Activated CD4-positive, alpha-beta memory T cell treated with anti-CD3 and anti-CD28 coated beads, Interleukin-2, amount 10 ng/mL, durations not matched to agents 7 days and 5 days (primary cell): ENCODE measurements at regions of chr1 and their contacts with region 1.

Region 1: GRCh38 chr1:159009704-159010361 is at the start of gene IFI16:
- DNase-seq: peak; percentile 72
- H3K4me3 Mint-ChIP-seq: peak within 1 kb of the TSS; percentile 99
- H3K27ac Mint-ChIP-seq: peak within 1 kb of the TSS; percentile 100
- H3K4me1 Mint-ChIP-seq: peaks cover 43% of the 10 kb centered on the region
- H3K27me3 Mint-ChIP-seq: no peaks in the 10 kb centered on the region
- total RNA-seq, gene IFI16: 394 to 395 TPM

Region 2: DNA sequence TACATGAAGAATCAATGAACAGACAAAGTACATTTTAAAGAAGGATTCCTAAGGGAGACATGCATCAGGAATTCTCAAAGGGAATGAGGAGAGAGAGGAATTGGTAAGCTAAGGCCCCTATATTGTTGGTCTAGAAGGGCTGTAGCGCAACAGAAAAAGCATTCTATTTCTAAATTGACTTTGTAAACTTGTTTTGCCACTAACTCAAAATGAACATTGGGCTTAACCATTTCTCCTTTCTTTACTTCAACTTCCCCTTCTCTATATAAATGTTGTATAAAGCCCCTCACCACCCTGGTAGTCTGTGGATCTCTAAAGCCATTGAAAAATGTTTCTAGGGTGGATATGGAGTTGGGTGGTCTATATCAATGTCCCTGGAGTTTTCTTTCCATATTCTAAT is 208.4 kb before region 1 on chr1:
- CTCF ChIA-PET with region 1: no interaction called
- POLR2A ChIA-PET with region 1: no interaction called
- DNase-seq: no peak
- H3K4me3 Mint-ChIP-seq: no peak overlapping the region
- H3K27ac Mint-ChIP-seq: no peak overlapping the region
- H3K4me1 Mint-ChIP-seq: peaks cover 2% of the 10 kb centered on the region
- H3K27me3 Mint-ChIP-seq: peaks cover 10% of the 10 kb centered on the region

Region 3: GRCh38 chr1:158830904-158831507 is 178.8 kb before region 1 on chr1 and contains the start of gene MNDA:
- CTCF ChIA-PET with region 1: no interaction called
- POLR2A ChIA-PET with region 1: no interaction called
- DNase-seq: no peak
- H3K4me3 Mint-ChIP-seq: no peak within 1 kb of the TSS
- H3K27ac Mint-ChIP-seq: peak within 1 kb of the TSS; percentile 23
- H3K4me1 Mint-ChIP-seq: peaks cover 12% of the 10 kb centered on the region
- H3K27me3 Mint-ChIP-seq: no peaks in the 10 kb centered on the region
- total RNA-seq, gene MNDA: not detected

Region 4: DNA sequence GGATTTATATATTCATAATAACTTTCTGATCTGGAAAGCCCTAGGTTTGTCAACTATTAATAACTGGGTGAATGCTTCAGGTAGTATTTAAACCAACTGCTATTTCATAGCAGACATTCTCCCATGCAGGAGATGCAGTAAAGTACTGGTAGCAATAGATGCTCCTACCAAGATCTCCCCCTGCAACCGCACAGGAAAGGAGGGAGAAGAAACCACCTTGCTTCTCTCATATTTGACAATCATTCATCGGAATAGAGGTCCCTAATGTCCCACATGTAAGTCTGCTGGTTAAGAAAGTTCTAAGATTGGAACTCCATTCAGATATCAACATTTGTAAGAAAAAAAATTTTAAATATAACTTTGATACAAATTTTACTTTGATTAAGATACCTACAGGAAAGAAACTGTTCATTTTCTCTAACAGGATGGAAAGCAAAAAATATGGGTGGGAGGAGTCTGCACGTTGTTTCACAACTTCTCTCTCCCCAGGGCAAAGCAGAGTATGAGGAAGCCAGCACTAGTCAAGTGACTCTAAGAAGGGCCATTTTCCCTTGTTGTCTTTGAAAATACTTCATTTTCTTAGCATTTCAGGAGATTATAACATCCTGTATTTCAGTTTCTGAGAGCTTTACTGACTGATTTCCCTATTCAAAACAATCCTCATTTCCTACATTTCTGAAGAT is 78.6 kb before region 1 on chr1 and contains the start of gene PYHIN1:
- CTCF ChIA-PET with region 1: interaction called, 5 read pairs
- POLR2A ChIA-PET with region 1: interaction called, 95 read pairs
- DNase-seq: peak; percentile 63
- H3K4me3 Mint-ChIP-seq: peak within 1 kb of the TSS; percentile 98
- H3K27ac Mint-ChIP-seq: peak within 1 kb of the TSS; percentile 95
- H3K4me1 Mint-ChIP-seq: peaks cover 36% of the 10 kb centered on the region
- H3K27me3 Mint-ChIP-seq: no peaks in the 10 kb centered on the region
- total RNA-seq, gene PYHIN1: 56.6 to 59.8 TPM

Region 5: DNA sequence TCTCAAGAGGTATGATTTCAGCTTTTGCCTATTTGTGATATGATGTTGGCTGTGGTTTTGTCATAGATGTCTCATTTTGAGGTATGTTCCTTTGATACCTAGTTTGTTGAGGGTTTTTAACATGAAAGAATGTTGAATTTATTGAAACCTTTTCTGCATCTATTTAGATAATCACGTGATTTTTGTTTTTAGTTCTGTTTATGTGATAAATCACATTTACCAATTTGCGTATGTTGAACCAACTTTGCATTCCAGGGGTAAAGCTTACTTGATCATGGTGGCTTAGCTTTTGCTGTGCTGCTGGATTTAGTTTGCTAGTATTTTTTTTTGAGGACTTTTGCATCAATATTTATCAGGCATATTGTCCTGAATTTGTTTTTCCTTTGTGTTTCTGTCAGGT is 26.6 kb before region 1 on chr1:
- CTCF ChIA-PET with region 1: no interaction called
- POLR2A ChIA-PET with region 1: no interaction called
- DNase-seq: no peak
- H3K4me3 Mint-ChIP-seq: no peak overlapping the region
- H3K27ac Mint-ChIP-seq: no peak overlapping the region
- H3K4me1 Mint-ChIP-seq: no peaks in the 10 kb centered on the region
- H3K27me3 Mint-ChIP-seq: no peaks in the 10 kb centered on the region

Region 6: DNA sequence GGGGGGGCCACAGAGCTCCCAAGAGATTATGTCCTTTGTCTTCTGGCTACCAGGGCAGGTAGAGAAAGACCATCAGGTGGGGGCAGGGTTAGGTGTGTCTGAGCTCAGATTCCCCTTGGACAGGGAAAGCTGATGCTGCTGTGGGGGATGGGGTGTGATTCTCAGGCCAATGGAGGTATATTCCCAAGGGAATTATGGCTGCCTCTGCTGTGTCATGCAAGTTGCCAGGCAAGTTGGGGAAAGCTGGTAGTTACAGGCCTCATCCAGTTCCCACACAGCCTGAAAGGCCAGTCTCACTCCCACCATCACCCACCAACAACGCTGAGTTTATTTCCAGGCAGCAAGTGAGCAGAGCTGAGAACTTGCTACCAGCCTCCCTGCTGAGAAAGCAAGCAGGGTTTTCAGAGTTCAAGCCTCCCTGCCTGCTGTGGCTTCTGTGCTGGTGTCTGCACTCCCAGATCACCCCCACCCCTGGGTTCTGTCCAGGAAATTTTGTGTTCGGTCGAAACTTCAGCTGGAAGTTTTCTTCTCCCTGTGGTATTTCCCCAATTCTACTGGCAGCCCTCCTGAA is 21.1 kb after region 1 on chr1:
- CTCF ChIA-PET with region 1: no interaction called
- POLR2A ChIA-PET with region 1: interaction called, 12 read pairs
- DNase-seq: no peak
- H3K4me3 Mint-ChIP-seq: no peak overlapping the region
- H3K27ac Mint-ChIP-seq: no peak overlapping the region
- H3K4me1 Mint-ChIP-seq: peaks cover 72% of the 10 kb centered on the region
- H3K27me3 Mint-ChIP-seq: no peaks in the 10 kb centered on the region

Region 7: DNA sequence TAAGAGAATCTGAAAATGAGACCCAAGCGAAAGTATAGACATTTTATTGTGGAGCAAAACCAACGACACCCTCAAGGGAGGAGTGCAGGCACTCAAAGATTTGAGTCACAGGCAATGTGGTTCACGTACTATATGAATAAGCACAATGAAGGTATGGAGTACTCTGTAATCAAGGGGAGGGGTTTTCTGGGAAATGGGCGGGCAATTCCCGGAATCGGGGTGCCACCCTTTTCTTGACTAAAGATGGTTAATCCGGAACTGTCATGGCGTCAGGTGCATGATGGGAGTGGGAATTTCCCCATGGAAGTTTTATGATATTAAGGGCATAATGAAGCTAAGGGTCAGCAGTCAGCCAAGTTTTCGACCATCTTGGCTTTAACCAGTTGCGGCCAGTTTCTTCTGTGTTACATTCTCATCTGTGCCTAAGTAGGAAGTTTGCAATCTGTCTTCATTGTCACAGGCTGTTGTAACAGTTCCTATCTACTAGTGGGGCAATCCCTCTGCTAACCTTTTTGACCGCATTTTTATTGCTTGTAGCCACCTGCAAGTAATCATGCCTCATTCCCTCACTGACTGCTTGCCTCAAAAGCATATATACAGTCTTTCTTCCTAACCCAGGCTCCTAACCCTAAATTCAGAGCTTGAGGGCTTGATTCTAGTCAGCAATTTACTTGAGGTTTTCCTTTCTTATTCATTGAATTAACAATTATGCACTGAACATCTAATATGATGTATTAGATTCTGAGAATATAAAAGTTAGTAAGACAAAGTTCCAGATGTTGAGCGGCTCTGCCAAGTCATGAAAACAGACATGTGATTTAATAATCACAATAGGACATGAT is 67.5 kb after region 1 on chr1:
- CTCF ChIA-PET with region 1: interaction called, 12 read pairs
- POLR2A ChIA-PET with region 1: interaction called, 260 read pairs
- DNase-seq: peak; percentile 99
- H3K4me3 Mint-ChIP-seq: peak overlapping the region; percentile 78
- H3K27ac Mint-ChIP-seq: peak overlapping the region; percentile 99
- H3K4me1 Mint-ChIP-seq: peaks cover 43% of the 10 kb centered on the region
- H3K27me3 Mint-ChIP-seq: peaks cover 2% of the 10 kb centered on the region

Region 8: DNA sequence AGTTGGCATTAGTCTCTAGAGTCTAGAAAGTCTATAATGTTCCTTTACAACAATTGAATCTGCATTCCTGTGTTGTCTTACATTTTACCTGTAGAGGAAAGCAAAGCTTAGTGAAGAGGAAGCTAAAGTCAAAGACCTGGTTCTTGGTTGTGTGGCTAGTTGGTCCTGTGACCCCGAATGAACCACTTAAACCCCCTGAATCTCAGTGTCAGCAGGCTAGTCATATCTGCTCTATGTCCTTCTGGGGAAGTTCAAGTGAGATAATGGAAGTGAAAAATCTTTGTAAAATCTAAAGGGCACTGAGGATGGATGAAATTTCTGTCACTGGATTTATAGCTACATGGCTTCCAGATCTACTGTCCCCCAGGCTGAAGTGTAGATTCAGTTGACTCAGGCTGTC is 90.8 kb after region 1 on chr1:
- CTCF ChIA-PET with region 1: no interaction called
- POLR2A ChIA-PET with region 1: no interaction called
- DNase-seq: no peak
- H3K4me3 Mint-ChIP-seq: no peak overlapping the region
- H3K27ac Mint-ChIP-seq: no peak overlapping the region
- H3K4me1 Mint-ChIP-seq: no peaks in the 10 kb centered on the region
- H3K27me3 Mint-ChIP-seq: peaks cover 43% of the 10 kb centered on the region

Region 9: DNA sequence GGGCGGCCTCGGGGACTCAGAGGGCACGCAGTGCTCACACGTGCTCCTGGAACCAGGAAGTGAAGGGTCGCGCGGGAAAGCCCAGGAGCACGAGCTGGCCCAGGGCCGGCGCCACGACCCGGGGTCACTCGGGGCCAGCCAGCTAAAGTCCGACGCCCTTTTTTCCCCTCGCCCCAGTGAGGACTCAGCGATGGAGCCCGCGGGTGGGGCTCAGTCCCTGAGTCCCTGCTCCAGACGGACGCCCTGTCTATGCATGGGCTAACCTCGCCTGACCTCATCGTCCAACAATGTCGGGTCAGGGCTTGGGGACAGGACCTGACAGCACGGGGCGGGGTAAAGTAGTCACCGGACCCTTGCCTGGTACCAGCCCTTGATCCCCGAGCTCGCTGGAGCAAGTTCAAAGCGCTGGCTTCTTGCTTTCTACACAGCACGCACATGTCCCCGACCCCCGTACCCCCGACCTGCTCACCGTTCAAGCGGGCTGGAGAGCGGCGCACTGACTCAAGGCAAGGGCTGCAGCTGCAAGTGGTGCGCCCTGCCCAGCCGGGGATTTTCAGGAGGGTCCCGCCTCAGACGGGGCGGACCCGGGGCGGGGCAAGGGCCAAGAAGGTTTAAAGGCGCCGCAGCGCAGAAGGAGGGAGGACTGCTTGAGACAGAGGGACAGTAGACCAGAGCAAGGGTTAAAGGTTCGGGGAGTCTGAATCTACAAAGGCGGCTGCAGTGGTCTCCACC is 915.3 kb after region 1 on chr1 and contains the start of gene TAGLN2:
- CTCF ChIA-PET with region 1: no interaction called
- POLR2A ChIA-PET with region 1: interaction called, 19 read pairs
- DNase-seq: peak; percentile 91
- H3K4me3 Mint-ChIP-seq: peak within 1 kb of the TSS; percentile 100
- H3K27ac Mint-ChIP-seq: peak within 1 kb of the TSS; percentile 98
- H3K4me1 Mint-ChIP-seq: peaks cover 36% of the 10 kb centered on the region
- H3K27me3 Mint-ChIP-seq: no peaks in the 10 kb centered on the region
- total RNA-seq, gene TAGLN2: 548 to 554 TPM